Adrenal gland (tissue), 19 donors: ENCODE measurements at regions of chr20 and their contacts with region 1.

Region 1: DNA sequence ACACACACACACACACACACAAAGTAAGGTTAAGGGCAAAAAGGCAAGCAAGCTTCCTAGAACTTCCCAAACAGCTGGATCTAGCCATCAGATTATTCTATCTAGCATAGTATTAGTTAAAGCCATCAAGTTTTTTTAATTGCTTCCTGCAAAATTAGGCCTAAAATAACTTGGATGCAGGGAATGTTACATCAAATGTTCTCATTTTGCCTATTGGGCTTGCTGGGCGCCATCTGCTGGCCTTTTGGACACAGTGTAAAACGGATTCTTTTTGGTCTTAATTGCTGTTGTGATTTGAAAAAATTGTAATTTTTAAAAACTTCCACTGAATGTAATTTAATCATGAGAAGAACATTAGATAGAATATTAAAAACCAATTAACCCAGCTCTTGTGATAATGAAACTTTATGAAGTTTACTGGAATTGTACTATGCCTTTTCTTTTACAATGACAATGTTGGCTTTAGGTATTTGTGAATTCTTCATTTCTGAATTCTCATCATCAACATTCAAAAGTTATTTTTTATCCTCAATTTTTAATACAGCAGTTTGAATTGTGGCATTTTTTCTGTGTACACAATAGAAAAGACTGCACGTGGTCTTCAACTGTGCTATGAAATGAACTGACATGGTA is 6.8 kb downstream of the MKKS start:
- DNase-seq: peak; percentile 27 to 84 (median 60)
- H3K4me3 ChIP-seq: no peak overlapping the region
- H3K27ac ChIP-seq: no peak overlapping the region
- H3K4me1 ChIP-seq: peaks cover 14 to 39% of the 10 kb centered on the region in 2 donors
- H3K27me3 ChIP-seq: no peaks in the 10 kb centered on the region
- CTCF ChIP-seq: peak; percentile 59 to 85 (median 78)
- POLR2A ChIP-seq: no peak

Region 2: DNA sequence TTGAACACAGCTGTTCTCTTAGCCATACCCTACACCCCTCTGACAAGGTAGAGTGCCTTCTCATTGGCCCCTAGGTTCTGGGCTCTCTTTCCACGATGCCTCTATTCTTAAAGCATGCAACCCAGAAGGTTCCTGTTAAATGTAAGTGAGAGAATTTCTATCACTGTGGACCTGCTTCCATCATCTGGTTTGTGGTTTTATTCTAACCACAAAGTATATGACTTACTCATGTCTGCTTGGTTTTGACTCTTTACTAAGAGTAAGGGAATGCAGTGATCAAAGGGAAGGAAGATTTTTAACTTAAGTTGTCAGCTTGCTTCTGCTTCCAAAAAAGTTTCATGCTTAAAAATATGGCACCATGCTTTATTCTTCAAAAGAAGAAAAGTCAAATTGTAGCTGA is 312.2 kb before region 1 on chr20:
- intact Hi-C with region 1: loop called in 1 of 2 experiments (anchors 10 kb)
- DNase-seq: no peak
- H3K4me3 ChIP-seq: no peak overlapping the region
- H3K27ac ChIP-seq: no peak overlapping the region
- H3K4me1 ChIP-seq: no peaks in the 10 kb centered on the region
- H3K27me3 ChIP-seq: no peaks in the 10 kb centered on the region
- CTCF ChIP-seq: no peak
- POLR2A ChIP-seq: no peak

Region 3: GRCh38 chr20:10591956-10592521 is 164.9 kb after region 1 on chr20:
- intact Hi-C with region 1: no loop called
- DNase-seq: no peak
- H3K4me3 ChIP-seq: no peak overlapping the region
- H3K27ac ChIP-seq: peak overlapping the region in 2 of 5 donors; percentile 15 to 42
- H3K4me1 ChIP-seq: peaks cover 6 to 20% of the 10 kb centered on the region in 2 donors
- H3K27me3 ChIP-seq: no peaks in the 10 kb centered on the region
- CTCF ChIP-seq: no peak
- POLR2A ChIP-seq: no peak